ENCODE measurements at regions of chr3 and their contacts with region 1.

Region 1: DNA sequence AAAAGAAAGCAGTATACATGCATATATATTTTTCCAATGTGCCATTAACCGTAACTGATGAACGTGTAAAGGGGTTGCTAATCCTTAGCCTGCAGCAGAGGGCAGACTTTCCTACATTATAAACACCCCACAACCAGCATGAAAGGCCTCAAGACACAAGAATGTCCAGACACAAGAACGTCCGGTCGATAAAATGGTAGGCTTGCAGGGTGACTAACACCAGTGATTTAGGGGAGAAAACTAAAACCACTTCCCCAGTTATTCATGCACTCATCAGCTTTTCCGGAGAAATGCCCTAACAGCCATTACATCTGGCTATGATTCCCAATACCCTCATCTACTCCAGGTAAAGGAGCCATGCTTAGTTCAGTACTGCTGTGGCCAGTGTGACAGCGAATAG is 57.4 kb downstream of the LRTM1 start:
- DNase-seq: peak; percentile 19
- H3K4me3 ChIP-seq: no peak overlapping the region
- H3K27ac ChIP-seq: no peak overlapping the region
- H3K4me1 ChIP-seq: no peaks in the 10 kb centered on the region
- H3K27me3 ChIP-seq: no peaks in the 10 kb centered on the region
- CTCF ChIP-seq: peak in 3 of 4 experiments; percentile 34 to 56 (median 54)
- POLR2A ChIP-seq: no peak

Region 2: GRCh38 chr3:54120657-54121413 is 749.6 kb before region 1 on chr3:
- intact Hi-C with region 1: no loop called
- DNase-seq: no peak
- H3K4me3 ChIP-seq: peak overlapping the region; percentile 37 to 45
- H3K27ac ChIP-seq: no peak overlapping the region
- H3K4me1 ChIP-seq: peaks cover 7% of the 10 kb centered on the region
- H3K27me3 ChIP-seq: peaks cover 13% of the 10 kb centered on the region
- CTCF ChIP-seq: no peak
- POLR2A ChIP-seq: no peak

Region 3: DNA sequence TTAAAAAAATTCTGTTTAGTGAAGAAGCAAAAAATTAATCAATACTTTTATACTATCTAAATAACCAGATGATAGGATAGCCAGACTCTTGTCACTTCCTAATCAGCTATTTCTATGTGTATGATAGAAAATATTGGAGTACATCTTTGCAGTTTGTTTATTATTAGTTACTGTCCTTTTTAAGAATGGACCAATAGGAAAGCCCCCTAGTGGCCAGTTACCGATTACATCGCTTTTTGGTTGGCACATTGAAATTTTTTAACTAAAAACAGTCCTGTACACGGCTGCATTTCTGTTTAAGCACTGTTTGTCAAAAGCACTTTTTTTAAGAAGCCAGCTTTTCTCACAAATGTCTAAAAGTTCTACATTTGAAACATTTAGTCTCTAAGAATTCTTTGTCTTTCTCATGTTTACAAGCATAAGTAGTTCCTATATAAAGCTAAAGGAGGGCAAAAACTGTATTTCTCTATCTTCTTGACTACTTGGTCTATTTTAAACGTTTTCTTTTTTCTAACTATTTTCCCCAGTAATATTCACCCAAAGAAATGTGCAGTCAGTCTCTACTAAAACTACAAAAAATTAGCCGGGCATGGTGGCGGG is 310.6 kb after region 1 on chr3:
- intact Hi-C with region 1: loop called (anchors 5 kb)
- DNase-seq: peak; percentile 13
- H3K4me3 ChIP-seq: no peak overlapping the region
- H3K27ac ChIP-seq: no peak overlapping the region
- H3K4me1 ChIP-seq: no peaks in the 10 kb centered on the region
- H3K27me3 ChIP-seq: no peaks in the 10 kb centered on the region
- CTCF ChIP-seq: peak; percentile 35 to 85 (median 58)
- POLR2A ChIP-seq: no peak